Heart left ventricle (tissue), 16 donors: ENCODE measurements at regions of chr5 and their contacts with region 1.

Region 1: DNA sequence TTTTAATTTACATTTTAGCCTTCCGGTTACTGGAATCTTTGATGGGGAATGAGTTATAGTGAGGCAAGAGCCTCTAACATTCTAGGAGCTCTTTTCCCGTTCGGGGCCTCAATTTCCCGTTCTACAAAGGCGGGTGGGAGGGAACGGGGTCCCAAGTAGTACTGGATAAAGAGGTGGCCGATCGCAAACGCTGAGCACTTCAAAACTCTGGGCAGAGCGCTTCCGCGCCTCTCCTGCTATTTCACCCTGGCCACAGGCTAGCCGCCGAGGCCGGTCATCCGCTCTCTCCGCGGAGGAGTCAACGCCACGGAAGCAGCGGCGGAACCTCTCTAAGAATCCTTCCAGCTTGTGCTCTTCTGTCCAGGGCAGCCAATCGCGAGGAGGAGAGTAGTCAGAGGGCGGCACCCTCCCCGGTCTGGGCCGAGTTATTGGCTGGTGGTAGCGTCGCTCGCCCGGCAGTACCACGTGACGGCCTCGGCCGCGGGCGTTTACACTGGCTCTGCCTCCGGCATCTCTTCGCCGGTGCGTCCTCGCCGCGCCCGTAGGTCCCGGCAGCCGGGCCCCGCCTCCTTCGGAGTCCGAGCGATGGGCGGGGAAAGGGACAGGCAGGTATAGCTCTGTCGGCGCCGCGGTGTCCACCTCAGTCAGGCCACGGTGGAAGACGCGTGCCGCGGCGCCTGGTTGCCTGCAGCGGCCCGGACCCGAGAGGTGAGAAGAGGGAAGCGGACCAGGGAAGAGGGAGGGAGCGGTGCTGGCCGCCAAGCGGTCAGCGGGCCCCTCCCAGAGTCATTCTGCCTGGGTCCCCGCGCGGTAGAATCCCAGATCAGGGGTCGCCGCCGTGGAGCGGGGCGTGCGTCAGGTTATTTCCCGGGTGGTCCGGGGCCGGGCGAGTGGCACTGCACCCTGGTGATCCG is at the start of gene SLC26A2:
- DNase-seq: peak; percentile 98
- ATAC-seq: peak; percentile 99 to 100 (median 100)
- H3K4me3 ChIP-seq: peak within 1 kb of the TSS; percentile 51 to 96 (median 72)
- H3K27ac ChIP-seq: peak within 1 kb of the TSS; percentile 49 to 93 (median 87)
- H3K4me1 ChIP-seq: peaks cover 0 to 22% (median 14%) of the 10 kb centered on the region in 12 donors
- H3K27me3 ChIP-seq: no peaks in the 10 kb centered on the region
- CTCF ChIP-seq: no peak
- POLR2A ChIP-seq: peak in 1 of 2 donors; percentile 96
- total RNA-seq, gene SLC26A2: 3.5 to 14.7 (median 6.8) TPM

Region 2: DNA sequence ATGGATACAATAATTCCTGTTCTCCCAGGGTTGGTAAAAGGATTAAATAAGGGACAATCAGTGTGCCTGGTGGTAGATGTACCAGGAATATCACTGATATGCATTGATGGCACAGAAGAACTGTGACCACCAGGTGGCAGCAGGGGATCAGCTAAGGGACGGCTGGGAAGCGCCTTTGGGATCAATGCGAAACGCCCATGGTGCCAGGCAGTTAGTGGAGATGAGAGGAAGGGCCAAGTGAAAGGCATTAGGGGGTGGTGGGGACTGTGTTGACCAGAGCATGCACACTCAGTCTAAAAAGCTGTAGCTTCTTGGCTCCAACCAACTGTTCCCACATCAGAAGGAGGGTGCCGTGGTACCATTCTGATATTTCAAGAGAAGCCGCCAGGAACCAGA is 323.7 kb before region 1 on chr5:
- intact Hi-C with region 1: loop called in 5 of 10 experiments (anchors 2 to 10 kb)
- DNase-seq: peak in 3 of 5 donors; percentile 87 to 93 (median 92)
- ATAC-seq: peak; percentile 51 to 68 (median 64)
- H3K4me3 ChIP-seq: no peak overlapping the region
- H3K27ac ChIP-seq: no peak overlapping the region
- H3K4me1 ChIP-seq: peaks cover 0 to 38% (median 27%) of the 10 kb centered on the region in 12 donors
- H3K27me3 ChIP-seq: no peaks in the 10 kb centered on the region
- CTCF ChIP-seq: peak; percentile 62 to 94 (median 84)
- POLR2A ChIP-seq: no peak

Region 3: GRCh38 chr5:149834246-149834855 is 126.2 kb before region 1 on chr5:
- intact Hi-C with region 1: loop called in 7 of 10 experiments (anchors 2 to 5 kb)
- DNase-seq: peak in 1 of 5 donors; percentile 56
- ATAC-seq: peak in 3 of 4 donors; percentile 24 to 44 (median 32)
- H3K4me3 ChIP-seq: no peak overlapping the region
- H3K27ac ChIP-seq: peak overlapping the region in 3 of 12 donors; percentile 5 to 39 (median 9)
- H3K4me1 ChIP-seq: peaks cover 0 to 29% (median 9%) of the 10 kb centered on the region in 12 donors
- H3K27me3 ChIP-seq: no peaks in the 10 kb centered on the region
- CTCF ChIP-seq: peak; percentile 28 to 74 (median 58)
- POLR2A ChIP-seq: no peak

Region 4: GRCh38 chr5:149878039-149878747 is 82.3 kb before region 1 on chr5:
- intact Hi-C with region 1: no loop called
- DNase-seq: no peak
- ATAC-seq: peak in 1 of 4 donors; percentile 45
- H3K4me3 ChIP-seq: no peak overlapping the region
- H3K27ac ChIP-seq: no peak overlapping the region
- H3K4me1 ChIP-seq: peaks cover 0 to 13% (median 0%) of the 10 kb centered on the region in 12 donors
- H3K27me3 ChIP-seq: no peaks in the 10 kb centered on the region
- CTCF ChIP-seq: no peak
- POLR2A ChIP-seq: no peak

Region 5: DNA sequence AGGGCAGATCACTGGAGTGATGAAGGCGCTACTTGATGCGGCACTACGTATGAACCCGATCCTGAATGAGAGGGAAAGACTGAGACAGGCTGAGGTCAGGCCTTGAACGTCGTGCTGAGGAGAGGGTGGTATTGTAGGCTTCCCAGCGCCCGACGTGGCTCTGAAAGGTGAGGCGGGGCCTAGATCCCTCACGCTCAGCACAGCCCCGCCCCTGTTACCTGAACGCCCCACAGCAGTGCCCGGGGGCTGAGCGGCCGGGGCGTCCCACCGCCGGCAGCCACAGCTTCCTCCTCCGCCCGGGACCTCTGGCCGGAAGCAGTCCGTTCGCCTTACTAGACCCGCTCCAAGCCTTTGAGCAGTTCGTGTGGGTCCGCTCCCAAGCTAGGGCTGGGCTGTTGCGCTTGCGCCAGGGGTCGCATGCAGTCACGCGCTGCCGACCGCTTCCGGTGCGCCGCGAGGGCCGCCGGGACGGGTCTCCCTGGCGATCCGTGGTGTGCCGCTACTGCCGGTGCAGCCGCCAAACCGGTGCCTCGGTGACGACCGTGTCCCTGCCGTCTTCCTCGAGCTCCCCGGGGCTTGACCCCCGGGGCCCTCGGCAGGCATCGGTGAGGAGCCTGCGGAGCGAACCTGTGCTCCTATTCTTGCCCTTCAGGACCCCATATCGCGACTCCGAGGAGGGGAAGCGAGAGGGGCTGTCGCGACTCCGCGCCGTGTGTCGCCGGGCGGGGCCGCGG is 39.9 kb after region 1 on chr5 and contains the starts of genes HMGXB3 and TIGD6:
- intact Hi-C with region 1: no loop called
- DNase-seq: peak; percentile 93 to 97 (median 96)
- ATAC-seq: peak; percentile 95 to 97 (median 97)
- H3K4me3 ChIP-seq: peak within 1 kb of the TSS; percentile 62 to 100 (median 92)
- H3K27ac ChIP-seq: peak within 1 kb of the TSS; percentile 72 to 98 (median 88)
- H3K4me1 ChIP-seq: peaks cover 0 to 41% (median 27%) of the 10 kb centered on the region in 12 donors
- H3K27me3 ChIP-seq: no peaks in the 10 kb centered on the region
- CTCF ChIP-seq: peak in 5 of 12 donors; percentile 11 to 38 (median 13)
- POLR2A ChIP-seq: peak; percentile 2 to 80
- total RNA-seq, gene HMGXB3: 12.4 to 25.9 (median 17.5) TPM
- total RNA-seq, gene TIGD6: 1.3 to 4.3 (median 2.6) TPM

Region 6: DNA sequence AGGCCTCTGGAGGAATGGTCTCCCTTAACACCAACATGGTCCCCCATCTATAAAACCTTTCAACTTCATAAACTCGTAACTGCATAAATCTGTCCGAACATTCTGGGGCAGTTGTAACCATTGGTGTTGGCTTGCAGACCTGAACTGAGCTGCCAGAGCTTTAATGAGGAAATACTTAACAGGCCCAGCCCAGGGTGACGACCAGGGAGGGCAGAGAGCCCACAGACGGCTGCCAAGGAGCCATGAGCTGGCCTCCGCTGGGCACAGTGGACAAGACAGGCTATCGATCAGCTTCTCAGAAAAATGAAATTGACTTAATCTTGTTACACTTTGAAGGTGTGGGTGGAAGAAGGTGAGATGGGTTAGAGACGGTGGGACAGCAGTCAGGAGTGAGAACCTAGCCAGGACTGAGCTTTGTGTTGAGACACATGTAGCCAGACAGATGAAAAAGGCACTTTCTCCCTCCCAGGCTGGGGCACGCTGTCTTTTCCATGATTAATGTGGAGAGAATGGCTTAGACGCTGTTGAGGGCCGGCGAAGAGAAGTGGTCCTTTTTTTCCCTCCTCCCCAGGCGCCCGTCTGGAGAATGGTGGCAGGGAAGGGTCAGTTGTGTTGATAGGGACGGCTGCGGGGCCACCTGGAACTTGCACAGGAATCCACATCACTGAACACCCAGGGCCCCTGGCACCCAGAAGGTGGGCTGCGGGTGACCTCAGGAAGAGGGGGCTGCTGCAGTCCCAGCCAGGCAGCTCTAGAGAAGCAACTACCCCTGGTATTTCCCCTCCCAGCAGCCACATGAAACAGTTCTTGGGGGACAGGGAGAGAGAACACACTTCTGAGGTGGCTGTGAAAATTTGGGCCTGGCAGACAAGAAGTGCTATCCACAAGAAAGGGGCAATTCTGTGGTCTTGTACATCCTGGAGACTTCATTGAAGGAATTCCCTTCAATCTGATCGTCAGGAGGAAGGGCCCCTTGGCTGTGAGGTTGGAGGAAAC is 369.6 kb after region 1 on chr5:
- intact Hi-C with region 1: no loop called
- DNase-seq: no peak
- ATAC-seq: no peak
- H3K4me3 ChIP-seq: no peak overlapping the region
- H3K27ac ChIP-seq: no peak overlapping the region
- H3K4me1 ChIP-seq: no peaks in the 10 kb centered on the region
- H3K27me3 ChIP-seq: no peaks in the 10 kb centered on the region
- CTCF ChIP-seq: no peak
- POLR2A ChIP-seq: no peak